ENCODE measurements at regions of chr1 and their contacts with region 1.

Region 1: DNA sequence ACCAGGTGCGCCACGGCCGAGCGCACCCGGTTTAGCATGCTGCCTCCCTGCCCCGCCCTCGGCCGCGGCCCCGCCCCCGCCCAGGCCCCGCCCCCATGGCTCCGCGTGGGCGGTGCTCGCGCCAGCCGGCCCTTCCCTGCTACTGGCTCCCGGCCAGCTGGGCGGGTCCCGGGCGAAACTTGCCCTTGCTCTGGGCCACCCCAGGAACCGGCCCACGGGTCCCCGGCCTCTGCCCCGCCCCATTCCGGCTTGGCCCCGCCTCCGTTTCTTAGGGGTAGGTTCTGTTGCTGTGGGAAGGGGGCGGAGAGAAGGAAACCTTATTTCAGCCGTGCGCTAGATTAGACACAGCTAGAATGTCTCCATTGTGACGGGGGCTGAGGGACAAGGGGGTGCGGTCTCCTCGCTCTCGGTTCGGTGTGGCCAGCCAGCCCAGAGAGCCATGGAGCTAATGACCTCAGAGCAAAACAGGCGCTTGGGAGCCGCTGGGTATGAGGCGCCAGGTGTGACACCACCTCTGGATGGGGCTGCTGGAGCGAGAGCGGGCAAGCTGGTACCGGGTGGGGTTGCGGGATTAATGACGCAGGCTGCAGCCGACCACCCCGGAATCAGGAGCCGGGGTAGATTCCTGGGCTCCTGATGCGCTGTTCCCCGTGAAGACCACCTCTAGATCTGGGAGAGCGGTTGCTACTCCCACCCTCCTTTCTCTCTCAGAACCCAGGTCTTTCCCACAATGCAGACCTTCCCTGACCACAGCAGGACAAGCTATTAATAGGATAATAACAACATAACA is at the start of gene PPM1J:
- H3K4me3 Mint-ChIP-seq: peak within 1 kb of the TSS; percentile 83
- H3K27ac Mint-ChIP-seq: peak within 1 kb of the TSS; percentile 77
- H3K4me1 Mint-ChIP-seq: peaks cover 79% of the 10 kb centered on the region
- H3K27me3 Mint-ChIP-seq: peaks cover 49% of the 10 kb centered on the region

Region 2: GRCh38 chr1:112803906-112804762 is 88.7 kb after region 1 on chr1:
- intact Hi-C with region 1: loop called (anchors 1 kb)
- H3K4me3 Mint-ChIP-seq: no peak overlapping the region
- H3K27ac Mint-ChIP-seq: no peak overlapping the region
- H3K4me1 Mint-ChIP-seq: peaks cover 14% of the 10 kb centered on the region
- H3K27me3 Mint-ChIP-seq: peaks cover 26% of the 10 kb centered on the region

Region 3: DNA sequence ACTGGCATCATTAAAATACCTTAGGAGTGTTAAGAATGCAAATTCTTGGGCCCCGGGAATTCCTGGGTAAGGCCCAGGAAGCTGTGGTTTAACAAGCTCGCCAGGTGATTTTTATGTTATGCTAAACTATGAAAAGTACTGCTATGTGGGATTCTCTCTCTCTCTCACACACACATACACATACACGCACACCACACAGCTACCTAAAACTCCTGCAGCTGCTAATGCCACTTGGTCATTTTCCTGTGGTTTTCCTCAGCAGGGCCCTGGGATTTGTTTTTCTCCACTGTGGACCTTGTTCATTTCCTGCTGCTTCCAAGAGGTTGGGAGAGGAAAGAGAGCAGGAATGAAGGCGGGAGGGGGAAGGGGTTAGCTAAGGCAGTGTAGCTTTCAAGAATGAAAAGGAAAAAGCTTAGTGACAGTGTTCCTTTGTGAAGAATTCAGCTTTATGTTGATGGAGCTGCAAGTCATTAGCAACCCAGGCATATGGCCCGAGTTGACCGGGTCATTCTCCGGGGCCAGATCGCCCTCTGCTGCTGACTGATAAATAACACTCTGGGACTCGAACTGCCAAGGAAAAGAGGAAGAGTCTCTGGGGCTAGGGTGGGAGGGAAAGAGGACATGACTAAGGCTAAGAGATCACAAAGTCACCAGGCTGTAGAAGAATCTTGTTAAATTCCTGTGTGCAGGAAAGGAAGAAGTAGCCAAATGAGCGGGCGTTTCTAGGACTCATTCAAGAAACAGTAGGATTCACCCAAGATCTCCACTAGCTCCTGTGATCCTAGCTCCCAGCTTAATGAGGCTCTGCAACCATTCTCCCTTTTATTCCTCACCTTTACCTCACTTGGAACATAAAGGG is 327.1 kb after region 1 on chr1:
- intact Hi-C with region 1: loop called (anchors 2 kb)
- H3K4me3 Mint-ChIP-seq: no peak overlapping the region
- H3K27ac Mint-ChIP-seq: peak overlapping the region; percentile 80
- H3K4me1 Mint-ChIP-seq: peaks cover 42% of the 10 kb centered on the region
- H3K27me3 Mint-ChIP-seq: peaks cover 2% of the 10 kb centered on the region

Region 4: GRCh38 chr1:113389953-113390834 is 674.7 kb after region 1 on chr1 and contains the start of gene MAGI3:
- intact Hi-C with region 1: loop called (anchors 10 kb)
- H3K4me3 Mint-ChIP-seq: peak within 1 kb of the TSS; percentile 94
- H3K27ac Mint-ChIP-seq: peak within 1 kb of the TSS; percentile 85
- H3K4me1 Mint-ChIP-seq: peaks cover 24% of the 10 kb centered on the region
- H3K27me3 Mint-ChIP-seq: peaks cover 52% of the 10 kb centered on the region

Measured in dendritic cell treated with granulocyte-macrophage colony-stimulating factor and Interleukin-4, amounts not matched to agents 40 ng/mL and 50 ng/mL, for 4 days (primary cell).